Transverse colon (tissue), 4 donors: ENCODE measurements at regions of chr6 and their contacts with region 1.

Region 1: GRCh38 chr6:145756146-145756662 is 20.9 kb upstream of the EPM2A start:
- DNase-seq: no peak
- H3K4me3 ChIP-seq: no peak overlapping the region
- H3K27ac ChIP-seq: no peak overlapping the region
- H3K4me1 ChIP-seq: no peaks in the 10 kb centered on the region
- H3K27me3 ChIP-seq: no peaks in the 10 kb centered on the region
- CTCF ChIP-seq: no peak
- EP300 ChIP-seq: no peak
- POLR2A ChIP-seq: no peak

Region 2: DNA sequence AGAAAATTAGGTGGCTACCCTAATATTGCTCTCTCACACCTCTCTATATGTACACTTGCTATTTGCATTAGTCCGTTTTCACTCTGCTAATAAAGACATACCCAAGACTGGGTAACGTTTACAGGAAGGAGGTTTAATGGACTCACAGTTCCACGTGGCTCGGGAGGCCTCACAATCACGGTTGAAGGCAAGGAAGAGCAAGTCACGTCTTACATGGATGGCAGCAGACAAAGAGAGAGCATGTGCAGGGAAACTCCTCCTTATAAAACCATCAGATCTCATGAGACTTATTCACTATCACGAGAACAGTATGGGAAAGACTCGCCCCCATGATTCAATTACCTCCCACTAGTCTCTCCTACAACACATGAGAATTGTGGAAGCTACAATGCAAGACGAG is 74.2 kb before region 1 on chr6:
- in situ Hi-C with region 1: no loop called
- intact Hi-C with region 1: no loop called
- DNase-seq: no peak
- H3K4me3 ChIP-seq: no peak overlapping the region
- H3K27ac ChIP-seq: no peak overlapping the region
- H3K4me1 ChIP-seq: no peaks in the 10 kb centered on the region
- H3K27me3 ChIP-seq: no peaks in the 10 kb centered on the region
- CTCF ChIP-seq: no peak
- EP300 ChIP-seq: no peak
- POLR2A ChIP-seq: no peak

Region 3: GRCh38 chr6:145789443-145789842 is 33.2 kb after region 1 on chr6:
- in situ Hi-C with region 1: no loop called
- intact Hi-C with region 1: loop called (anchors 2 kb)
- DNase-seq: no peak
- H3K4me3 ChIP-seq: no peak overlapping the region
- H3K27ac ChIP-seq: no peak overlapping the region
- H3K4me1 ChIP-seq: no peaks in the 10 kb centered on the region
- H3K27me3 ChIP-seq: no peaks in the 10 kb centered on the region
- CTCF ChIP-seq: no peak
- EP300 ChIP-seq: no peak
- POLR2A ChIP-seq: no peak

Region 4: DNA sequence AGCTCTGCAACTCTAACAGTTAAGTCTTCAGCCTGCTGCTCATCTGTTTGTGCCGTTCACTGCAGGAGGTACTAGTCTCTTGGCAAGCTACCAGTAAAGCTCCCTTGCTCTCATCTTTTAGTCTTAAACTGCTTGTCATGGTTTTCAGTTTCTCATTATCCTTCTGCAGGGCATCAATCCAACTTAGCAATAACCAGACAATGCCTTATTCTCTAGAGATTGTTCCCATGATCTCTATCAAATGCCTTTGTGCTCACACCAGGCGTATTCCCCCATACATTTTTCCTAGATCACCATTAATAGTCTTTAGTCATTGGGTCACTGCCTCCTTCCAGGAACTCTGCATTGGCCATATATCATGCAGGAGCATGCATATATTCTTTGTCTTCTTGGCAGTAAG is 444.0 kb after region 1 on chr6:
- in situ Hi-C with region 1: no loop called
- intact Hi-C with region 1: no loop called
- DNase-seq: no peak
- H3K4me3 ChIP-seq: no peak overlapping the region
- H3K27ac ChIP-seq: no peak overlapping the region
- H3K4me1 ChIP-seq: no peaks in the 10 kb centered on the region
- H3K27me3 ChIP-seq: no peaks in the 10 kb centered on the region
- CTCF ChIP-seq: no peak
- EP300 ChIP-seq: no peak
- POLR2A ChIP-seq: no peak